Naive thymus-derived CD4-positive, alpha-beta T cell (primary cell): ENCODE measurements at regions of chr2 and their contacts with region 1.

Region 1: DNA sequence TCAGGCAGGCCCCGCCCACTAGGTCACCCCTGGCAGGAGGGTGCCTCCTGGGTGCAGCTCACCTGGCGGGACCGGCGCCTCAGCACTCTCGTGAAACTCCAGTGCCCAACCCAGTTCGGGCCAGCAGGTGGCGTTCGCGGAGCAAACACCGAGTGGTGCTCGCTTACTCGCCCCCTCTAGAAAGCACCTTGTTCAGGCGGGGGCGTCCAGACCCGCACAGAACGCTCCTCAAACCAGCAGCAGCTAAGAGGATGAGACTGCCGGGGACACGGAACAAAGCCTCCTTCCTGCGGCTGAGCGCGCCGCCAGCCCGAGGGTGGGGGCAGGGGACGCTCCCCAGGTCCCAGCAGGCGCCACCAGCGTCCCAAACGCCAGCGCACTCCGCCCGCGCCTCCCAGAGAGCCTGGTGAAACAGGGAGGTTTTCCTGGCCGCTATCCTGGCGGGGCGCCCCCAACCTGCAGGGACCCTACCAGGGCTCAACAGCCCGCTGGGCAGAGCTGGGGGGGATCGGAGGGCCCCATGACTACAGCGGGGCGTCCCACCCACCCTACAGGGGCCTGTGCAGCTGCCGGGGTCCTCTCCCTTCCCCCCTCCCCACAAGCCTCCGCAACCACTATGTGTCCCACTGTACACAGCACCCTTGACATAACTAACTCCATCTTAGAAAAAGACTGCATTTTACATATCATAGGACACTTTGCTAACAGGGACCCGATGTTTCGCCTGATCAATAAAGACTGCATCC is 44.7 kb downstream of the MRPS5 start:
- DNase-seq: peak; percentile 77 to 92 (median 89)
- ATAC-seq: peak; percentile 87
- H3K4me3 ChIP-seq: peak overlapping the region; percentile 90
- H3K4me3 Mint-ChIP-seq: peak overlapping the region; percentile 85 to 97 (median 93)
- H3K27ac ChIP-seq: peak overlapping the region; percentile 80
- H3K27ac Mint-ChIP-seq: peak overlapping the region; percentile 96 to 99 (median 98)
- H3K4me1 ChIP-seq: peaks cover 22 to 73% of the 10 kb centered on the region in 2 donors
- H3K4me1 Mint-ChIP-seq: peaks cover 28 to 83% (median 77%) of the 10 kb centered on the region in 7 donors
- H3K27me3 ChIP-seq: no peaks in the 10 kb centered on the region
- H3K27me3 Mint-ChIP-seq: no peaks in the 10 kb centered on the region

Region 2: DNA sequence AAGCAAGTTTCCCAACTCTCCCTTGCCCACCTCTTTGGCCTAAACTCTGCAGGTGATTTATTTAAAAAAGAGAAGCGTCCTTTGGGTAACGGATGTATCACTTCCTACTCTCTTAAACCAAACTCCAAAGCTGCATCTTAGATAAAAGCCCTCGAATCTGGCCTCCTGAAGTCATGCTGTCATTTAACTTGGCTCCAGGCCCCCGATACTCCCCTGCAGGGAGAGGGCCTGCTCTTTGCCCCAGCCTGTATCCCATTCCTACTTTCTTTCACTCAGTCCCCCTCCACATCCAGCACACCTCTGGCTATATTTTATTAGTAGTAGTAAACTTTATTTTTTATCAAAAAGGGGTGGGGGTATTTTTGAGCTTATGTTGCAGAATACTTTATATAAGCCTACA is 186.7 kb before region 1 on chr2:
- CTCF ChIA-PET with region 1: no interaction called
- POLR2A ChIA-PET with region 1: no interaction called
- intact Hi-C with region 1: no loop called
- DNase-seq: no peak
- ATAC-seq: no peak
- H3K4me3 ChIP-seq: no peak overlapping the region
- H3K4me3 Mint-ChIP-seq: no peak overlapping the region
- H3K27ac ChIP-seq: no peak overlapping the region
- H3K27ac Mint-ChIP-seq: no peak overlapping the region
- H3K4me1 ChIP-seq: no peaks in the 10 kb centered on the region
- H3K4me1 Mint-ChIP-seq: no peaks in the 10 kb centered on the region
- H3K27me3 ChIP-seq: no peaks in the 10 kb centered on the region
- H3K27me3 Mint-ChIP-seq: peaks cover 9 to 39% (median 25%) of the 10 kb centered on the region in 5 donors

Region 3: DNA sequence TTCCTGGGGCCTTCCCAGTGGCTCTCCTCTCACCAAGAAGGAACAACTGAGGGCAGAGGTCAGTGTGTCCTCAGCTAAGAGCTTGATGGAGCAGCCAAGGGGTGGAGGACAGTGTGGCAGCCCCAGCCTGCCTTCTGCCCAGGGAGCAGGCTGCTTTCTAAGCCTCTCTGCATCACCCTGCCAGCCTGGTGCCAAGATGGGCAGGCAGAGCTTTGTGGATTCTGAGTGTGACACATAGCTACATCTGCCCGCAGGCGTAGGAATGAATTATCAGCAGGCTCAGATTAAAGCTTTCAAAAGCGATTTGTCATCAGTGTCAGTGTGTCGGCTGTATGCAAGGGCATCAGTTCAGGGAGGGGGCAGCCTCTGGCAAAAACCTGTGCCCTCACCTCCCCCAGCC is 42.7 kb before region 1 on chr2:
- CTCF ChIA-PET with region 1: interaction called, 28 read pairs
- POLR2A ChIA-PET with region 1: interaction called, 1,031 read pairs
- intact Hi-C with region 1: no loop called
- DNase-seq: no peak
- ATAC-seq: no peak
- H3K4me3 ChIP-seq: no peak overlapping the region
- H3K4me3 Mint-ChIP-seq: peak overlapping the region in 6 of 10 donors; percentile 22 to 74 (median 50)
- H3K27ac ChIP-seq: peak overlapping the region; percentile 59
- H3K27ac Mint-ChIP-seq: peak overlapping the region in 8 of 9 donors; percentile 49 to 98 (median 86)
- H3K4me1 ChIP-seq: peaks cover 0 to 86% of the 10 kb centered on the region in 2 donors
- H3K4me1 Mint-ChIP-seq: peaks cover 52 to 99% (median 94%) of the 10 kb centered on the region in 7 donors
- H3K27me3 ChIP-seq: no peaks in the 10 kb centered on the region
- H3K27me3 Mint-ChIP-seq: no peaks in the 10 kb centered on the region

Region 4: GRCh38 chr2:95053543-95053942 is 23.4 kb before region 1 on chr2:
- CTCF ChIA-PET with region 1: interaction called, 163 read pairs
- POLR2A ChIA-PET with region 1: interaction called, 581 read pairs
- intact Hi-C with region 1: loop called in 1 of 2 experiments (anchors 1 kb)
- DNase-seq: peak in 1 of 9 donors; percentile 42
- ATAC-seq: no peak
- H3K4me3 ChIP-seq: no peak overlapping the region
- H3K4me3 Mint-ChIP-seq: peak overlapping the region; percentile 2 to 78 (median 49)
- H3K27ac ChIP-seq: peak overlapping the region; percentile 62
- H3K27ac Mint-ChIP-seq: peak overlapping the region; percentile 76 to 98 (median 90)
- H3K4me1 ChIP-seq: peaks cover 0 to 70% of the 10 kb centered on the region in 2 donors
- H3K4me1 Mint-ChIP-seq: peaks cover 29 to 94% (median 87%) of the 10 kb centered on the region in 7 donors
- H3K27me3 ChIP-seq: no peaks in the 10 kb centered on the region
- H3K27me3 Mint-ChIP-seq: no peaks in the 10 kb centered on the region

Region 5: GRCh38 chr2:95115418-95115817 is 38.5 kb after region 1 on chr2:
- CTCF ChIA-PET with region 1: interaction called, 82 read pairs
- POLR2A ChIA-PET with region 1: interaction called, 23 read pairs
- intact Hi-C with region 1: loop called (anchors 1 kb)
- DNase-seq: peak; percentile 41 to 78 (median 72)
- ATAC-seq: peak; percentile 98
- H3K4me3 ChIP-seq: no peak overlapping the region
- H3K4me3 Mint-ChIP-seq: no peak overlapping the region
- H3K27ac ChIP-seq: no peak overlapping the region
- H3K27ac Mint-ChIP-seq: peak overlapping the region in 5 of 9 donors; percentile 18 to 76 (median 52)
- H3K4me1 ChIP-seq: peaks cover 16 to 29% of the 10 kb centered on the region in 2 donors
- H3K4me1 Mint-ChIP-seq: peaks cover 37 to 50% (median 43%) of the 10 kb centered on the region in 7 donors
- H3K27me3 ChIP-seq: no peaks in the 10 kb centered on the region
- H3K27me3 Mint-ChIP-seq: no peaks in the 10 kb centered on the region

Region 6: DNA sequence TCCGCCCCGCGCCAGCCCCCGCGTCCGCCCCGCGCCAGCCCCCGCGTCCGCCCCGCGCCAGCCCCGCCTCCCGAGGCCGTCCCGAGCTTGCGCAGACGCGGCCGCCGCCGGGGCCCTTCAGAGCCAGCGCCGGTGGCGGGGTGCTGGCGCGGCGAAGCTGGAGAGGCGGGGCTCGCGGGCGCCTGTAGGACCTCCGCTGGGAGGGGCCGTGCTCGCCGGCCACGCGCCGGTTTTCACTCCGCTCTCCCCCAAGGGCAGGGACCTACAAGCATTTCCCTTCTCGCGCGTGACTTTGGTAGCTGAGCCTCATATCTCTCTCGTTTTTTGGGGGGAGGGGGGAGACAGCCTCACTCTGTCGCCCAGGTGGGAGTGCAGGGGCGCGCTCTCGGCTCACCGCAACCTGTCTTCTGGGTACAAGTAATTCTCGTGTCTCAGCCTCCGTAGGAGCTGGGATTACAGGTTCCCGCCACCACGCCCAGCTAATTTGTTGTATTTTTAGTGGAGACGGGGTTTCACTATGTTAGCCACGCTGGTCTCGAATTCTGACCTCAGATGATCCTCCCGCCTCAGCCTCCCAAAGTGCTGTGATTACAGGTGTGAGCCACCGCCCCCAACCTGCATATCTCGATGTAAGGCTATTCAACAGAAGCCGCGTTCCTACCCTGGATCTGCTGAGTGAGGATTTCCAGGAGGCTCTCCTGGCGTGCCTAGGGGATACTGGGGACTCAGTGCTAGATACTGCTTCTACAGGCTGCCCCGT is 82.9 kb after region 1 on chr2 and contains the start of gene ZNF514:
- CTCF ChIA-PET with region 1: interaction called, 3 read pairs
- POLR2A ChIA-PET with region 1: interaction called, 23 read pairs
- intact Hi-C with region 1: loop called (anchors 1 kb)
- DNase-seq: peak; percentile 69 to 85 (median 72)
- ATAC-seq: peak; percentile 95
- H3K4me3 ChIP-seq: peak within 1 kb of the TSS; percentile 83
- H3K4me3 Mint-ChIP-seq: peak within 1 kb of the TSS; percentile 86 to 94 (median 90)
- H3K27ac ChIP-seq: peak within 1 kb of the TSS; percentile 75
- H3K27ac Mint-ChIP-seq: peak within 1 kb of the TSS; percentile 82 to 94 (median 87)
- H3K4me1 ChIP-seq: peaks cover 0 to 13% of the 10 kb centered on the region in 2 donors
- H3K4me1 Mint-ChIP-seq: peaks cover 12 to 34% (median 30%) of the 10 kb centered on the region in 7 donors
- H3K27me3 ChIP-seq: no peaks in the 10 kb centered on the region
- H3K27me3 Mint-ChIP-seq: no peaks in the 10 kb centered on the region
- total RNA-seq, gene ZNF514: 10.6 to 39.9 (median 16.6) TPM

Region 7: DNA sequence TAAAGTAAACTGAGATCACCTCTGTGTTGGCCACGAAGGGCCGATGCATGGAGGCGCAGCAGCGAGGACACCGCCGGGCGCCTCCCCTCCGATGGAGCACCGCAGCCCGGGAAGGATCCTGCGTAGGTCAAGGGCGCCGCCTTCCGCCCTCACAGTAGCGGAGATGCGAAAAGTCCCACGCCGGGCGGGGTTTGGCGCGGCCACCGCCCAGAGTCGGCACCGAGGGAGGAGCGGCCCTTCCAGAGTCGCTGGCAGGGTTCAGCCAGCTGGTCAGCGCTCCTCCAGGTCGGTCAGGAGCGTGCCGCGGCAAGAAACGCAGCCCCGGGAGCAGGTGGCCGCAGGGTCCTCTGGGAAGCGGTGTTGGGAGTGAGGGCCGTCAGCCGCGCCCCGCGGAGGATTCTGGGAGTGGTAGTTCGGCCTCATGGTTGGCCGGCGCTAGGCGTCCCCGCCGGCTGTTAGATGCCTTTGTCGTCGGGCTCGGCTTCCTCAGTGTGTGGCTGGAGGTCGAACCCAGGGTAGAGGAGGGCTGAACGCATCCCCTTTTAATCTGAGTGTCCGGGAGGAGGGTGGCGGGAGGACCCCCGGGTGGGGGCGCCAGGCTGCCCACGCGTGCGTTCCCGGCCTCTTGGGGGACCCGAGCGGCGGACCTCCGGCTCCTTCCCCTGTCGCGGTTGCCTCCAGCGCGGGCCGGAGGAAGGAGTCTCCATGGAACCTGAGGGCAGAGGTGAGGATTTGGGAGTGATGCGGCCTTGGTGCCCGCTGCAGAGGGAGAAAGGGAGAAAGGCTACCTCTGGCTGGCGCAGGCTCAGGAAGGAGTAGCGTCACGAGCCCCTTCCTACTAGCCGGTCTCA is 130.4 kb after region 1 on chr2 and contains the start of gene ZNF892:
- CTCF ChIA-PET with region 1: no interaction called
- POLR2A ChIA-PET with region 1: interaction called, 4 read pairs
- intact Hi-C with region 1: loop called (anchors 1 to 5 kb)
- DNase-seq: peak; percentile 50 to 83 (median 63)
- ATAC-seq: peak; percentile 95
- H3K4me3 ChIP-seq: peak within 1 kb of the TSS; percentile 89
- H3K4me3 Mint-ChIP-seq: peak within 1 kb of the TSS; percentile 92 to 96 (median 94)
- H3K27ac ChIP-seq: peak within 1 kb of the TSS; percentile 85
- H3K27ac Mint-ChIP-seq: peak within 1 kb of the TSS; percentile 75 to 89 (median 81)
- H3K4me1 ChIP-seq: peaks cover 7 to 9% of the 10 kb centered on the region in 2 donors
- H3K4me1 Mint-ChIP-seq: peaks cover 17 to 37% (median 27%) of the 10 kb centered on the region in 7 donors
- H3K27me3 ChIP-seq: no peaks in the 10 kb centered on the region
- H3K27me3 Mint-ChIP-seq: no peaks in the 10 kb centered on the region
- total RNA-seq, gene ZNF892: 1.7 to 6.4 (median 4.3) TPM